ENCODE measurements at regions of chr13 and their contacts with region 1.

Region 1: GRCh38 chr13:113448885-113449692 is 4.2 kb downstream of the ADPRHL1 start:
- DNase-seq: peak in 2 of 5 donors; percentile 43 to 67
- ATAC-seq: peak; percentile 0 to 25 (median 12)
- H3K4me3 ChIP-seq: peak overlapping the region in 11 of 12 donors; percentile 32 to 76 (median 64)
- H3K27ac ChIP-seq: peak overlapping the region; percentile 37 to 96 (median 72)
- H3K4me1 ChIP-seq: peaks cover 3 to 59% (median 31%) of the 10 kb centered on the region in 12 donors
- H3K27me3 ChIP-seq: no peaks in the 10 kb centered on the region
- CTCF ChIP-seq: no peak
- POLR2A ChIP-seq: no peak

Region 2: DNA sequence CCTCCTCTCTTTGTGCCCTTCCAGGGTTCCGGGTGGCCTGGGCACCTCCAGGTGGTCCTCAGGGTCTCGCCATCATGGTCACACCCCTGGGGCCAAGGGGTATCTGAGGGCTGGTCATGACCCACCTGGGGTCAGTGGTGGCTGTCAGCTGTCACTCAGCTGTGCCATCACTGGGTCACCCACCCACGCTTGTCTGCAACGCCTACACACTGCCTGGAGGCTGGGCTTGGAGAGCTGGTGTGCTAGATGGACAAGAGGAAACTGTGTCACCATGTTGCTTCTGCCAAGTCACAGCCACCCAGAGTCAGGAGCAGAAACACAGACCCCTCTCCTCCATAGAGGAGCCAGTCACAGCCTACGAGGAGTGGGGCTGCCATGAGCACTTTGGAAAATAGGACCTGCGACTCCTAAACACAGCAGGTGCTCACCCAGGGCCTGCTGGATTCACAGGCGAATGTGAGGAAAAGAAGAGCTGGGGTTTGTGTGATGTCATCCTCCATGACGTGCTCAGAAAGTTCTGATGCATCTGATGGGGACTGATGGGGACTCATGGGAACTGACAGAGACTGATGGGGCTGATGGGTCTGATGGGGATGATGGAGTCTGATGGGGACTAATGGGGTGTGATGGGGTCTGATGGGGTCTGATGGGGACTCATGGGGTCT is 74.4 kb before region 1 on chr13:
- intact Hi-C with region 1: no loop called
- DNase-seq: no peak
- ATAC-seq: peak in 1 of 4 donors; percentile 27
- H3K4me3 ChIP-seq: no peak overlapping the region
- H3K27ac ChIP-seq: no peak overlapping the region
- H3K4me1 ChIP-seq: no peaks in the 10 kb centered on the region
- H3K27me3 ChIP-seq: no peaks in the 10 kb centered on the region
- CTCF ChIP-seq: no peak
- POLR2A ChIP-seq: no peak

Region 3: DNA sequence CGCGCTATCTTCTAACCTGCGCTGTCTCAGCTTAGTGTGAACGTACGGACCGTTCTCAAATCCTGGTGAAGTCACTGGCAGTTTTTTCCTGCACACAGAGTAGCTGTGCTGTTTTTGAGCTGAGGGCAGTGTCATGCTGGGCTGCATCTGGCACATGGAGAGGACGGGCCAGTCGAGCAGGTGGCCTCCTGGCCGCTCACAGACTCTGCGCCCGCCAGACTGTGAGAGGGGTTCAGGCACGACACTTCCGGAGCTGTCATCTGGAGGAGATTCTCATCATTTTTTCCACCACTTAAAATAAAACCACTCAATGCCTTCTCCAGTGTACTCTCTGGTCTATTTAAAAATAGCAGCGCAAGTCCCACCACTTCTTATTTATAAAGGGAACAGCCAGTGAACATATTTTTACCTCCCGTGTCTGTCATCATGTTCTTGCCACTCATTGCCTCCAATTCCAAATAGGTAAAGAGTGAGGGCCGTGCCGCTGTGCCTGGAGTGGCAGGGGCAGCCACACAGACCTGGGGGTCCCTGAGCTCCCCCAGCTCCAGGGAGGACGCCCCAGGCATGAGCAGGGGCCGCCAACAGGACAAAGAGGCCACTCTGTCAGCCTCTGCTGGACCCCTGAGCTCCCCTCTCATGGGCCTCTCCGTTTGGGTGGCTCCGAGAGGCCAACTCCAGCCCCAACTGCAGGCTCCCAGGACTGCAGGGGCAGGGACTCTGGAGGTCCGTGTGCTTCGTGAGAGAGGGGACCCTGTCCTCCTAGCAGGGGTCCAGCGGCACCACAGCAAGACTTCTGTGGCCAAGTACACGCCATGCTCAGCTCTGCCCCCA is 48.3 kb before region 1 on chr13:
- intact Hi-C with region 1: loop called in 1 of 10 experiments (anchors 2 kb)
- DNase-seq: peak; percentile 72 to 92 (median 80)
- ATAC-seq: peak; percentile 78 to 84 (median 81)
- H3K4me3 ChIP-seq: peak overlapping the region in 1 of 12 donors; percentile 5
- H3K27ac ChIP-seq: peak overlapping the region; percentile 82 to 99 (median 94)
- H3K4me1 ChIP-seq: peaks cover 0 to 55% (median 15%) of the 10 kb centered on the region in 12 donors
- H3K27me3 ChIP-seq: peaks cover 0 to 5% (median 0%) of the 10 kb centered on the region in 9 donors
- CTCF ChIP-seq: no peak
- POLR2A ChIP-seq: peak in 1 of 2 donors; percentile 66